Activated B cell treated with CpG ODN at 0.5 μM for 24 hours (primary cell): ENCODE measurements at regions of chr3 and their contacts with region 1.

Region 1: DNA sequence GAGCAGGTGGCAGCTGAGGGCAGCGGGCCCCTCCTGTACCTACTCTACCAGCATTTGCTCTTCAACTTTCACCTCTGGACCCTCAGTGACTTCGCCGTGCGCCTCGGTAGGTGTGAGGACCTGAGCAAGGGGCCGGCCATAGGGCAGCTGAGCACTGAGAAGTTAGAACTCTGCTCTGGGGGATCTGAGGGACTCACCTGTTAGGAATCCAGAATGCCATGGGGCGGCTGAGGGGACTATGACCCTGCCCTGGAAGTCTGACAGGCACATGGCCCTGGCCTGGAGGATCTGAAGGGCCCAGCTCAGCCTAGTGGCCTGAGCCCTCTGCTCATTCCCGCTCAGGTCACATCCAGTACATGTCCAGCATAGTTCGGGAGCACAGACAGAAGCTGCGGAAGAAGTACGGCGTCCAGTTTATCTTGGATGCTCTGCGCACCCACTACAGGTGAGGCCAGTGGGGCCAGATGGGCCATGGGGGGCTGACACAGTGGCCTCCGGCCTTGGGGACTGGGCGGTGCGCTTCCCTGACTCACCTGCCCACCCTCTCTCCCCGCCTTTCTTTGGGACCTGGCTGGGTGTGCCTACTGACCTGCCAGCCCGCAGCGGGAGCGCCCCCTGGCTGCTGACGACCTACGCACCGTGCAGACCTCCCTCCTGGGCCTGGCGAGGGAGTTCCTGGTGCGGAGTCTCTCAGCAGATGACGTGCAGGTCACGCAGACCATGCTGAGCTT is 18.8 kb downstream of the NBEAL2 start:
- DNase-seq: peak; percentile 72
- ATAC-seq: peak; percentile 90
- H3K4me3 Mint-ChIP-seq: no peak overlapping the region
- H3K27ac Mint-ChIP-seq: no peak overlapping the region
- H3K4me1 Mint-ChIP-seq: peaks cover 10% of the 10 kb centered on the region
- H3K27me3 Mint-ChIP-seq: no peaks in the 10 kb centered on the region
- CTCF ChIP-seq: peak; percentile 24

Region 2: GRCh38 chr3:46845791-46846623 is 152.3 kb before region 1 on chr3:
- CTCF ChIA-PET with region 1: no interaction called
- POLR2A ChIA-PET with region 1: interaction called, 4 read pairs
- intact Hi-C with region 1: loop called (anchors 5 kb)
- DNase-seq: peak; percentile 82
- ATAC-seq: peak; percentile 96
- H3K4me3 Mint-ChIP-seq: peak overlapping the region; percentile 87
- H3K27ac Mint-ChIP-seq: peak overlapping the region; percentile 83
- H3K4me1 Mint-ChIP-seq: peaks cover 6% of the 10 kb centered on the region
- H3K27me3 Mint-ChIP-seq: no peaks in the 10 kb centered on the region
- CTCF ChIP-seq: no peak

Region 3: GRCh38 chr3:46909535-46910442 is 88.5 kb before region 1 on chr3:
- CTCF ChIA-PET with region 1: interaction called, 12 read pairs
- POLR2A ChIA-PET with region 1: interaction called, 4 read pairs
- intact Hi-C with region 1: no loop called
- DNase-seq: peak; percentile 68
- ATAC-seq: peak; percentile 91
- H3K4me3 Mint-ChIP-seq: no peak overlapping the region
- H3K27ac Mint-ChIP-seq: no peak overlapping the region
- H3K4me1 Mint-ChIP-seq: peaks cover 7% of the 10 kb centered on the region
- H3K27me3 Mint-ChIP-seq: no peaks in the 10 kb centered on the region
- CTCF ChIP-seq: peak; percentile 44

Region 4: DNA sequence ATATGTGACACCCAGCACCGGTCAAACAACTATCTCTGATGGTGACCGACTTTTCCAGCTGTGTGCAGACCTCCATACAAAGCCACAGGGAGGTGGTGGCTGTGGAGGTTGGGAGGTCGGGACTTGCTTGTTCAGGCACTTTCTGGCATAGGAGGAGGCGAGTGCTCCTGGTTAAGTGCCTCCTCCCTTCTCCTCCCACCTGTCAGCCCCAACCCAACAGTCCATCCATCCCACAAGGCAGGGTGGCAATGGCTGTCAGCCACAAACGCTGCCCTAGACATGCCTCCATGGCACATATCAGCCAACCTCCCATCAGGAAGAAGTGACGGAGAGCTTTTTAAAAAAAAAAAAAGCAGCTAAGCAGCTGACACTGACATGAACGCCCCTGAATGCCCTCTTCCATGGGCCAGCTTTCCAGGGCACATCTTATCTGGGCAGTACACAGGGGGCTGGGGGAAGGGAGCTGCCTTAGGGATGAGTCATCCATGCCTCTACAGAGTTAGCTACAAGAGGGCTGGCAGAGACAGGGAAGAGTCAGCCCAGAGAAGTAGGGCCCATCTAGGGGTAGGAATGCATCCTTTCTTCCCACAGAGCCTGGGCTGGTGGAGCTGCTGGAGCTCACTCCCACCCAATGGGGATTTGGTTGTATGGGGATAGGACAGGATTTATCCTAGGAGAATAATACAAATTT is 63.0 kb before region 1 on chr3:
- CTCF ChIA-PET with region 1: interaction called, 13 read pairs
- POLR2A ChIA-PET with region 1: no interaction called
- intact Hi-C with region 1: no loop called
- DNase-seq: no peak
- ATAC-seq: no peak
- H3K4me3 Mint-ChIP-seq: no peak overlapping the region
- H3K27ac Mint-ChIP-seq: peak overlapping the region; percentile 56
- H3K4me1 Mint-ChIP-seq: peaks cover 89% of the 10 kb centered on the region
- H3K27me3 Mint-ChIP-seq: no peaks in the 10 kb centered on the region
- CTCF ChIP-seq: no peak

Region 5: DNA sequence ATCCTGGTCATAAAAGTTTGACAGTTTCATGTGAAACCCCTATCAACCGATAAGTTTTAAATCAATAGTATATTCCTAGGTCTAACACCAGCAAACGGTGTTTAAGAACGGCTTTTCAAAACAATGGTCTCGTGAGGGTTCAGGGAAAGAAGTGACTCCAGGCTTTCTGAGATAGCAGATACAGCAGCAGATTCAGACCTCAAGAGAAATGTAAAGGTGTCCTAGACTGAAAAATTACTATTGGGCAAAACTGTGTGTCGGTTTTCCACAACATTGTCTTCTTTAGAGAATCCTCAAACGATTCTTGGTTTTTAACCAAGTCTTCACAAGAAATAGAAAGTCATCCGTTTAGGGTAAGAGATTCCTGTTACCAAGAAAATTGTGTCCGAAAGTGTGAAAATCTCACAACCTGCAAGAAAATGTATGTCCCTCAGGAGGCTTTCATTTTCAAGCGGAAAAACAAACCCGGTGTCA is 164.4 kb after region 1 on chr3:
- CTCF ChIA-PET with region 1: no interaction called
- POLR2A ChIA-PET with region 1: no interaction called
- intact Hi-C with region 1: no loop called
- DNase-seq: no peak
- ATAC-seq: no peak
- H3K4me3 Mint-ChIP-seq: peak overlapping the region; percentile 95
- H3K27ac Mint-ChIP-seq: peak overlapping the region; percentile 96
- H3K4me1 Mint-ChIP-seq: peaks cover 67% of the 10 kb centered on the region
- H3K27me3 Mint-ChIP-seq: no peaks in the 10 kb centered on the region
- CTCF ChIP-seq: no peak

Region 6: GRCh38 chr3:47406762-47407149 is 408.5 kb after region 1 on chr3:
- CTCF ChIA-PET with region 1: no interaction called
- POLR2A ChIA-PET with region 1: no interaction called
- intact Hi-C with region 1: no loop called
- DNase-seq: no peak
- ATAC-seq: no peak
- H3K4me3 Mint-ChIP-seq: no peak overlapping the region
- H3K27ac Mint-ChIP-seq: no peak overlapping the region
- H3K4me1 Mint-ChIP-seq: no peaks in the 10 kb centered on the region
- H3K27me3 Mint-ChIP-seq: no peaks in the 10 kb centered on the region
- CTCF ChIP-seq: no peak